Calu3 (cell line): ENCODE measurements at regions of chr12 and their contacts with region 1.

Region 1: DNA sequence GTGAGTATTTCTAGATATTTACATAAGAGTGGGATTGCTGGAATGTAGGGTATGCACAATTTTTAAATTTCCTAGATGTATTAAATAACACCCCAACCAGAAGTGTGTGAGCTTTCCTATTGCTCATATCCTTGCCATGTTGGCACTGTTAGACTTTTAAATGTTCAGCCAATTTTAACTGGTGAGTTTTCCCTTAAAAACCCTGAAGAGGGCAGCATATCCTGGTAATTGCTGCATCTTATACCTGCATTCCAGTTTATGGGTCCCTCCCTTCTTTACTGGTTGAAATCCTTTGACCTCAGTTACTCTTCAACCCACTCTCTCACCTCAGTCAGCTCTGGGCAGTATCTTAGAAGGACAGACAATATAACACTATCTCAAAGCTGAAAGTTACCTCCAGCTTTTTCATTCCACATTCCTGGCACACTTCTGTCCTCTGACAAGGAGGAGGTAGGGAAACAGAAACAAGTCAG is 270.6 kb downstream of the PAWR start:
- DNase-seq: peak; percentile 52
- H3K4me3 Mint-ChIP-seq: no peak overlapping the region
- H3K27ac Mint-ChIP-seq: peak overlapping the region; percentile 76
- H3K4me1 Mint-ChIP-seq: peaks cover 94% of the 10 kb centered on the region
- H3K27me3 Mint-ChIP-seq: no peaks in the 10 kb centered on the region
- CTCF ChIP-seq: peak; percentile 31

Region 2: GRCh38 chr12:78916845-78917480 is 503.2 kb before region 1 on chr12:
- CTCF ChIA-PET with region 1: no interaction called
- intact Hi-C with region 1: no loop called
- DNase-seq: peak; percentile 65
- H3K4me3 Mint-ChIP-seq: no peak overlapping the region
- H3K27ac Mint-ChIP-seq: peak overlapping the region; percentile 83
- H3K4me1 Mint-ChIP-seq: peaks cover 36% of the 10 kb centered on the region
- H3K27me3 Mint-ChIP-seq: no peaks in the 10 kb centered on the region
- CTCF ChIP-seq: no peak

Region 3: DNA sequence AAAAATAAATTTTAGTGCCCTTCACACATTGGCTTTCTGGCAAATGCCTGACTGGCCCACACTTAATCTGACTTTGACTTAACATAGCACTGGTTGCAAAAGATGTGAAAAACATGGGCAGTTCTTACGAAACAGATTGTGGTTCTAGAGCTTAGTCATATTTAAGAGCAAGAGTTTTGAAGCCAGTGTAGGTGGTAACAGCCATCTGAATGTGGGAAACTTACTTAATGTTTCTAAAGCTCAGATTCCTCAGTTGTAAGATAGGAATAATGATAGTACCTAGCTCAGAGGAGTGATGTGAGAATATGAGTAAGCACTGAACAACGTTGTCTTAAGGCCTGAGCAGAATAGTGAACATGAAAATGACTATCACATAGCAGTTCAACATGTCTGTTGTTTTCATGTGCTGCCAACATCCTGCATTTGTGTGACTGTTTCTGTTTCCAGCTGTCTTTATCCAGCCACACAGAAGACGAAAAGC is 292.9 kb before region 1 on chr12:
- CTCF ChIA-PET with region 1: no interaction called
- intact Hi-C with region 1: no loop called
- DNase-seq: no peak
- H3K4me3 Mint-ChIP-seq: no peak overlapping the region
- H3K27ac Mint-ChIP-seq: no peak overlapping the region
- H3K4me1 Mint-ChIP-seq: no peaks in the 10 kb centered on the region
- H3K27me3 Mint-ChIP-seq: no peaks in the 10 kb centered on the region
- CTCF ChIP-seq: no peak

Region 4: DNA sequence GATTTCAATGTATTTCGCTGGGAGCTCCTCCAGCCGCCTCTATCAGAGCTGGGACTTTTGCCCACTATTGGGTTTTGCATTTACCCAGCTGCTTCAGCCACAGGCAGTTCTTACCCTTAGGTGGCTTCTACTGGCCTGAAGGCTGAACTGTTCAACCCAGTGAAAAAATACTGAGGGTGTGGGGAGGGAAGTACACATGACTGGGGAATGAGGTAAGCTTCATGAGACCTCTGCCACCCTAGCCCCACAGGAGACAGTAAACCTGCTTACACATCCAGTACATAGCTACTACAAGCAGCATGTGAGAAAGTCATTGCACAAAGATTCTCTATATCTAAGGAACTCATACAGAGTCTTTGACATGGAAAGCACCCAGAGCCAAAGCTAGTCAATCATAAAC is 144.6 kb before region 1 on chr12:
- CTCF ChIA-PET with region 1: no interaction called
- intact Hi-C with region 1: no loop called
- DNase-seq: no peak
- H3K4me3 Mint-ChIP-seq: no peak overlapping the region
- H3K27ac Mint-ChIP-seq: no peak overlapping the region
- H3K4me1 Mint-ChIP-seq: no peaks in the 10 kb centered on the region
- H3K27me3 Mint-ChIP-seq: no peaks in the 10 kb centered on the region
- CTCF ChIP-seq: no peak

Region 5: GRCh38 chr12:79448822-79449221 is 28.6 kb after region 1 on chr12:
- CTCF ChIA-PET with region 1: interaction called, 9 read pairs
- intact Hi-C with region 1: loop called (anchors 2 kb)
- DNase-seq: peak; percentile 76
- H3K4me3 Mint-ChIP-seq: peak overlapping the region; percentile 57
- H3K27ac Mint-ChIP-seq: peak overlapping the region; percentile 50
- H3K4me1 Mint-ChIP-seq: peaks cover 47% of the 10 kb centered on the region
- H3K27me3 Mint-ChIP-seq: no peaks in the 10 kb centered on the region
- CTCF ChIP-seq: peak; percentile 54

Region 6: GRCh38 chr12:79547735-79548609 is 127.8 kb after region 1 on chr12:
- CTCF ChIA-PET with region 1: interaction called, 19 read pairs
- intact Hi-C with region 1: loop called (anchors 1 kb)
- DNase-seq: peak; percentile 71
- H3K4me3 Mint-ChIP-seq: peak overlapping the region; percentile 7
- H3K27ac Mint-ChIP-seq: peak overlapping the region; percentile 83
- H3K4me1 Mint-ChIP-seq: peaks cover 88% of the 10 kb centered on the region
- H3K27me3 Mint-ChIP-seq: no peaks in the 10 kb centered on the region
- CTCF ChIP-seq: peak; percentile 71

Region 7: GRCh38 chr12:79690638-79691493 is 270.7 kb after region 1 on chr12 and contains the start of gene PAWR:
- CTCF ChIA-PET with region 1: interaction called, 4 read pairs
- intact Hi-C with region 1: loop called (anchors 2 kb)
- DNase-seq: peak; percentile 92
- H3K4me3 Mint-ChIP-seq: peak within 1 kb of the TSS; percentile 75
- H3K27ac Mint-ChIP-seq: peak within 1 kb of the TSS; percentile 93
- H3K4me1 Mint-ChIP-seq: peaks cover 39% of the 10 kb centered on the region
- H3K27me3 Mint-ChIP-seq: no peaks in the 10 kb centered on the region
- CTCF ChIP-seq: no peak
- total RNA-seq, gene PAWR: 172 and 204 TPM in 2 replicates

Region 8: GRCh38 chr12:79737875-79738718 is 317.9 kb after region 1 on chr12:
- CTCF ChIA-PET with region 1: interaction called, 6 read pairs
- intact Hi-C with region 1: loop called (anchors 2 kb)
- DNase-seq: peak; percentile 67
- H3K4me3 Mint-ChIP-seq: no peak overlapping the region
- H3K27ac Mint-ChIP-seq: no peak overlapping the region
- H3K4me1 Mint-ChIP-seq: no peaks in the 10 kb centered on the region
- H3K27me3 Mint-ChIP-seq: no peaks in the 10 kb centered on the region
- CTCF ChIP-seq: peak; percentile 40

Region 9: GRCh38 chr12:79935021-79935623 is 514.9 kb after region 1 on chr12 and contains the start of gene PPP1R12A:
- CTCF ChIA-PET with region 1: no interaction called
- intact Hi-C with region 1: loop called (anchors 5 kb)
- DNase-seq: peak; percentile 99
- H3K4me3 Mint-ChIP-seq: peak within 1 kb of the TSS; percentile 93
- H3K27ac Mint-ChIP-seq: peak within 1 kb of the TSS; percentile 94
- H3K4me1 Mint-ChIP-seq: peaks cover 15% of the 10 kb centered on the region
- H3K27me3 Mint-ChIP-seq: no peaks in the 10 kb centered on the region
- CTCF ChIP-seq: no peak
- total RNA-seq, gene PPP1R12A: 86.7 and 97.4 TPM in 2 replicates